Dorsolateral prefrontal cortex (tissue), 120 donors: ENCODE measurements at regions of chr3 and their contacts with region 1.

Region 1: GRCh38 chr3:52685709-52686691 is at the starts of genes GNL3 and PBRM1:
- DNase-seq: peak; percentile 88 to 96 (median 94)
- H3K4me3 ChIP-seq: peak within 1 kb of the TSS; percentile 65 to 98 (median 89)
- H3K27ac ChIP-seq: peak within 1 kb of the TSS; percentile 72 to 99 (median 95)
- H3K27me3 ChIP-seq: no peaks in the 10 kb centered on the region
- CTCF ChIP-seq: peak in 16 of 56 donors; percentile 6 to 40 (median 14)
- total RNA-seq, gene GNL3: 22.3 to 57.4 (median 40.7) TPM
- total RNA-seq, gene PBRM1: 41.4 to 68.2 (median 53.3) TPM

Region 2: GRCh38 chr3:52455283-52456168 is 230.5 kb before region 1 on chr3 and contains the start of gene NISCH:
- intact Hi-C with region 1: loop called in 1 of 2 experiments (anchors 5 kb)
- DNase-seq: peak; percentile 75 to 91 (median 80)
- H3K4me3 ChIP-seq: peak within 1 kb of the TSS; percentile 58 to 98 (median 82)
- H3K27ac ChIP-seq: peak within 1 kb of the TSS; percentile 88 to 100 (median 96)
- H3K27me3 ChIP-seq: no peaks in the 10 kb centered on the region
- CTCF ChIP-seq: peak in 18 of 56 donors; percentile 9 to 32 (median 18)
- total RNA-seq, gene NISCH: 146 to 372 (median 259) TPM

Region 3: GRCh38 chr3:52536369-52537164 is 149.4 kb before region 1 on chr3 and contains the start of gene UQCC5:
- intact Hi-C with region 1: loop called (anchors 1 to 2 kb)
- DNase-seq: peak; percentile 95 to 98 (median 96)
- H3K4me3 ChIP-seq: peak within 1 kb of the TSS; percentile 50 to 97 (median 84)
- H3K27ac ChIP-seq: peak within 1 kb of the TSS in 56 of 59 donors; percentile 10 to 92 (median 83)
- H3K27me3 ChIP-seq: no peaks in the 10 kb centered on the region
- CTCF ChIP-seq: peak in 42 of 56 donors; percentile 4 to 63 (median 36)
- total RNA-seq, gene UQCC5: 4.8 to 19.1 (median 10.9) TPM

Region 4: DNA sequence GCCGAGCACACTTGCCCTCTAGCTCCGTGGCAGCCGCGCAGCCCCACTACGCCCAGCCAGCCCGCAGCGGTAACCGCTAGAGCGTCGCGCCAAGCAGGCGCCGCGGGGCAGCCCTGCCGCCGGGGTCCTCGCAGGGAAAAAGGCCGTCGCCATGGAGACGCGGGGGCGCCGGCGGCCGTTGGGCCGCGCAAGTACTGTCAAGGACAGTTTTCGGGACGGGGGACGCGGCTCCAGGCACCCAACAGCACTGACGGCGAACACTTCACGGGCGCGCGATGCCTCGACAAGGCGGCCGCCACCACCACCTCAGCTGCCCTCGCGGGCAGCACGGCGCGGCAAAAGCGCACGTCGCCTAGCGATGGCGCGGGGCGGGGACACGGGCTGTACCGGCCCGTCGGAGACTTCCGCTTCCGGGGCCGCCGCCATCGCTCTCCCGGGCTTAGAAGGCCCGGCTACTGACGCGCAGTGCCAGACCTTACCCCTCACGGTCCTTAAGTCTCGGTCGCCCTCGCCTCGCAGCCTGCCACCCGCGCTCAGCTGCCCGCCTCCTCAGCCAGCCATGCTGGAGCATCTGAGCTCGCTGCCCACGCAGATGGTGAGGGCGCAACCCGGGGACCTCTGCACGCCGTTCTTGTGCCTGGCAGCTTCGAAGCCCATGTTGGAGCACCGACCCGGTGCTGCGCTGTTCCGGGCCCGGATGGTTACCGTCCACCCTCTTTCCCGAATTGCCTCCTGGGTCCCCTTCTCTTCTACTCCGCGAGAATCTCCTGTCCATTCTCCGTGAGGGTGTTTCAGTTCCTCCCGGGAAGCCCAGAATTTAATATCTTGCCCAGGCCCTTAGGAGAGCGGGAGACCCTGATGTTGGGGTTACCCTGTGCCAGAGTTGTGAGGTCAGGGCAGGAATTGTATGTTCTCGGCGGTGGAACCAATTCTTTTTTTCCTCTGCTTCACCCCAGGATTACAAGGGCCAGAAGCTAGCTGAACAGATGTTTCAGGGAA is 20.0 kb after region 1 on chr3 and contains the starts of genes GLT8D1 and SPCS1:
- intact Hi-C with region 1: loop called (anchors 1 to 2 kb)
- DNase-seq: peak; percentile 77 to 93 (median 87)
- H3K4me3 ChIP-seq: peak within 1 kb of the TSS; percentile 48 to 100 (median 96)
- H3K27ac ChIP-seq: peak within 1 kb of the TSS; percentile 24 to 96 (median 90)
- H3K27me3 ChIP-seq: no peaks in the 10 kb centered on the region
- CTCF ChIP-seq: peak in 29 of 56 donors; percentile 2 to 59 (median 27)
- total RNA-seq, gene GLT8D1: 31.5 to 63.2 (median 47.2) TPM
- total RNA-seq, gene SPCS1: 50.3 to 110 (median 78.8) TPM

Region 5: GRCh38 chr3:52763466-52763865 is 77.5 kb after region 1 on chr3:
- intact Hi-C with region 1: no loop called
- DNase-seq: no peak
- H3K4me3 ChIP-seq: no peak overlapping the region
- H3K27ac ChIP-seq: peak overlapping the region in 2 of 59 donors; percentile 25 to 29
- H3K27me3 ChIP-seq: no peaks in the 10 kb centered on the region
- CTCF ChIP-seq: no peak

Region 6: GRCh38 chr3:53130179-53131061 is 444.4 kb after region 1 on chr3 and contains the start of gene RFT1:
- intact Hi-C with region 1: no loop called
- DNase-seq: peak; percentile 95 to 99 (median 97)
- H3K4me3 ChIP-seq: peak within 1 kb of the TSS; percentile 72 to 99 (median 93)
- H3K27ac ChIP-seq: peak within 1 kb of the TSS; percentile 35 to 94 (median 84)
- H3K27me3 ChIP-seq: no peaks in the 10 kb centered on the region
- CTCF ChIP-seq: peak in 44 of 56 donors; percentile 7 to 60 (median 37)
- total RNA-seq, gene RFT1: 8.0 to 22.2 (median 15.5) TPM